ENCODE measurements at regions of chr9 and their contacts with region 1.

Region 1: DNA sequence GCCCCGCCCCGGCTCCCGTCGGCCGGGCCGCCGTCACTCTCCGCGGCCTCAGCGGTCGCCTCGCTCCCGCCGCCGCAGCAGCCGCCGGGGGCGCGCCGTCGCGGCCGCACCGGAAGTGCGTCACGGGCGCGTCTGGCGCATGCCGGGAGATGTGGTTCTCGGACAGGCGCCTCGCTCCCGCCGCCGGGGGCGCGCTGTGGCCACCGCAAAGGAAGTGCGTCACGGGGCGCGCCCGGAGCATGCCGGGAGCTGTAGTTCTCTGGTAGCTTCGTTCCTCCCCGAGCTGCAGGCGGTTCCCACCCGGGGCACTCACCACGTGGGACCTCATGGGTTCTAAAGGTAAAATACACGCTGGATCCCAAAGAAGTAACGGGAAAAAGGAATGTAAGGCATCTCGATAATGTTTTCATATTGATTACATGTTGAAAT is at the start of gene UBAC1:
- DNase-seq: peak; percentile 93 to 97
- H3K4me3 ChIP-seq: peak within 1 kb of the TSS; percentile 96 to 97
- H3K27ac ChIP-seq: peak within 1 kb of the TSS; percentile 75 to 95
- H3K4me1 ChIP-seq: peaks cover 6 to 25% (median 13%) of the 10 kb centered on the region in 4 donors
- H3K27me3 ChIP-seq: peaks cover 0 to 3% of the 10 kb centered on the region in 2 donors
- CTCF ChIP-seq: peak; percentile 45 to 63

Region 2: DNA sequence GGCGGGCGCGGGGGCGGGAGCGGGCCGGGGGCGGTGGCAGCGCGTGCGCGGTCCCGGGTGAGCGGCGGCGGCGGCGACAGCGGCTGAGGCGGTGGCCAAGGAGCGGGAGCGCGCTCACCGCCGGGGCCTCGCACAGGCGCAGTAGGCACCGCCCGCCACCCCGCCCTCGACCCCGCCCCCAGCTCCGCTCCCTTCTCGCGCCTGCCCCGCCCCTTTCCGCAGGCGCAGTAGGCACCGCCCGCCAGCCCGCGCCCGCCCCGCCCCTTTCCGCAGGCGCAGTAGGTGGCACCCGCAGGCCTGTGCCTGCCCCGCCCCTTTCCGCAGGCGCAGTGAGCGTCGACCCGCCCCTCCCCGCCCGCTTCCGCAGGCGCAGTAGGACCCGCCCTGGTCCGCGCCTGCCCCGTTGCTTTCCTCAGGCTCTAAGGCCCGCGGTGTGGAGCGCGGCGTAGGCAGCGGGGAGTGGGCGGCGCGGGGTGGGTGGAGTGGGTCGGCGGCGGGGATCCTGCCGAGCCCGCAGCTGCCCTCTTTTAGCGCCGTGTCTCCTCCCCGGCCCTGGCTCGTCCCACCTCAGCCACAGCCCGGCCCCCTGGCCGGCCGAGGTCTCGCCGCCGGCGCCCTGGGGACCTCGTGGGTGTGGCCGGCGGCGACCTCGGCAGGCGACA is 53.7 kb before region 1 on chr9 and contains the start of gene CAMSAP1:
- intact Hi-C with region 1: loop called (anchors 2 kb)
- DNase-seq: peak; percentile 86 to 96
- H3K4me3 ChIP-seq: peak within 1 kb of the TSS; percentile 91 to 92
- H3K27ac ChIP-seq: peak within 1 kb of the TSS; percentile 90 to 91
- H3K4me1 ChIP-seq: peaks cover 0 to 41% (median 28%) of the 10 kb centered on the region in 4 donors
- H3K27me3 ChIP-seq: no peaks in the 10 kb centered on the region
- CTCF ChIP-seq: no peak

Region 3: GRCh38 chr9:136245219-136246150 is 284.2 kb after region 1 on chr9 and contains the start of gene QSOX2:
- intact Hi-C with region 1: loop called (anchors 10 kb)
- DNase-seq: peak; percentile 73 to 88
- H3K4me3 ChIP-seq: peak within 1 kb of the TSS; percentile 74
- H3K27ac ChIP-seq: peak within 1 kb of the TSS; percentile 23 to 46
- H3K4me1 ChIP-seq: peaks cover 0 to 14% (median 9%) of the 10 kb centered on the region in 4 donors
- H3K27me3 ChIP-seq: no peaks in the 10 kb centered on the region
- CTCF ChIP-seq: peak in 1 of 2 experiments; percentile 17